WTC11 (cell line): ENCODE measurements at regions of chr15 and their contacts with region 1.

Region 1: DNA sequence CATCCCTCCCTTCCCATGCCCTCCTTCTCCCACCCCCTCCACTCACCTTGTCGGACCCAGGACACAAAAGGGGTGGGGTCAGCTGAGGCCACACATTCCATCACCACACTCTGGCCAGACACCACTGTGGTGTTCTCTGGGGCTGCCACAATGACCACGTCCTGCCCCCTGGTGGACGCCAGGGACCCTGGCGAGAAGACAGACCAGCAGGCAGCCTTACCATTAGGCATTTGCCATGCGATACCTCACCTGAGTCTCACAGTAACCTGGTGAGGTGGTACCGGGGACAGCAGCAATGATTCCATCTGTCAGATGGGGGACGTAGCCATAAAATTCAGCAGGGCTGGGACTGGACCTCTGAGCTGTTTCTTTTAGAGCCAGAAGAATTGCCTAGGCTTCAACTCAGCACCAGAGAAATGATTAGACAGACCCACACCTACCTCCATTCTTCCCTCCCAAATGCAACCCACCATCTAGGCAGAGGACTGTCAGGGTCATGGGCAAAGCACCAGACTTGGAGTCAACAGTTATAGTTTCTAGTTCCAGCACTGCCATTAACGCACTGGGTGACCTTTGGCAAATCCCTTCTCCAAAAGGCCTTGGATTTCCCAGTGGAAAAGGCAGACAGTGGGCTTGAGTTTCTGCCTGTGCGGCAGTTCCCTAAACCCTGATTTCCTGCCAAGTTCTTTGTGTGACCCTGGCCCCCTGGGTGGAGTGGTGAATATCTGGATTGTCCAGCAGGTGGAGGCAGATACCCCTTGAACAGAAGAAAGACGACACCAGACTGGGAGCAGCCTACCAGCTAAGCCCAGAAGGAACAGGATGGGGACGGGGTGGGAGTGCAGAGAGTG is 21.8 kb downstream of the IGDCC4 start:
- DNase-seq: peak; percentile 92
- ATAC-seq: peak; percentile 83
- H3K4me3 Mint-ChIP-seq: no peak overlapping the region
- H3K27ac Mint-ChIP-seq: peak overlapping the region; percentile 95
- H3K4me1 Mint-ChIP-seq: peaks cover 42% of the 10 kb centered on the region
- H3K27me3 Mint-ChIP-seq: peaks cover 24% of the 10 kb centered on the region
- CTCF ChIP-seq: peak; percentile 74

Region 2: DNA sequence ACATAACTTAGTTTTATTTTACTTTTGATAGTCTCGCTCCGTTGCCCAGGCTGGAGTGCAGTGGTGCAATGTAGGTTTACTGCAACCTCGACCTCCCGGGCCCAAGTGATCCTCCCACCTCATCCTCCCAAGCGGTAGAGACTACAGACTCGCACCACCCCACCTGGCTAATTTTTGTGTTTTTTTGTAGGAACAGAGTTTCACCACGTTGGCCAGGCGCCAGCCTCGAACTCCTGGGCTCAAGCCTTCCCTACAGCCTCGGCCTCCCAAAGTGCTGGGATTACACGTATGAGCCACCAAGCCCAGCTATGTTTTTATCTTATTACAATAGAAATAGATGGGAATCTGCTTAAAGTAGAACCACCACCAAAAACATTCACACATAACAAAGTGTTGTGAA is 102.3 kb before region 1 on chr15:
- CTCF ChIA-PET with region 1: no interaction called
- POLR2A ChIA-PET with region 1: no interaction called
- DNase-seq: no peak
- ATAC-seq: no peak
- H3K4me3 Mint-ChIP-seq: no peak overlapping the region
- H3K27ac Mint-ChIP-seq: no peak overlapping the region
- H3K4me1 Mint-ChIP-seq: peaks cover 24% of the 10 kb centered on the region
- H3K27me3 Mint-ChIP-seq: no peaks in the 10 kb centered on the region
- CTCF ChIP-seq: no peak

Region 3: GRCh38 chr15:65414841-65415621 is 14.0 kb after region 1 on chr15:
- CTCF ChIA-PET with region 1: interaction called, 105 read pairs
- POLR2A ChIA-PET with region 1: interaction called, 6 read pairs
- DNase-seq: peak; percentile 89
- ATAC-seq: peak; percentile 85
- H3K4me3 Mint-ChIP-seq: peak overlapping the region; percentile 54
- H3K27ac Mint-ChIP-seq: peak overlapping the region; percentile 100
- H3K4me1 Mint-ChIP-seq: peaks cover 96% of the 10 kb centered on the region
- H3K27me3 Mint-ChIP-seq: no peaks in the 10 kb centered on the region; the same call in 1 of the 2 replicates
- CTCF ChIP-seq: no peak

Region 4: DNA sequence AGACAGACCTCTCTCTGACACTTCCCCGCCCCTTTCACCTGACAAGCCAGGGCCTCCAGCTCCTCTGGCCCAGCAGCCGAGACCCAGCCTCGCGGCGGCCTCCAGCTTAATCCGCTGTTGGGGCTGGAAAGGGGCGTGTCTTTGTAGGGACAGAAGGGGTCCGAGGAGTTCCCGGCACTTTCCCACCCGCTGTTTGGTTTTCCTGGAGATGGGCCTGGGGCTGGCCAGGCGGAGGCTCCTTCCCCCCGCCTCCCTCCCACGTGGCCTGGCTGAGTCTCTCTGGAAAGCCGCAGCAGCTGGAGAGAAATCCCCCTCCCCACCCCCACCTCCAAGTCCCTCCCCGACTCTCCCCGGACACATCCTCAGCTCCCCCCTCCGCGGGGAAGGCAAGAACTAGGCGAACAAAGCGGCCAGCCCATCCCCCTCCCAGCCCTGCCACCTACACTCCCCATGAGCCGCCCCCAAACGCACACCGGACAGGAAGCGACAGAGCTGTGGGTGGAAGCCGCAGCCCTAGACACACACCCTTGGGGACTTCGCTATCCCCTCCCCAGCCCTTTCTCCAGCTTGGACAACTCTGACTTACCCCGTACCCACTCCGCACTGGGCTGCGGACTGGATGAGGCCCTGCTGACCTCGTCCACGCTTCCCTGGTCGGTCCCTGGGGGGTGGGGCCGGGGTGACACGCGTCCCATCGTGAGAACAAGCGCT is 20.5 kb after region 1 on chr15:
- CTCF ChIA-PET with region 1: interaction called, 105 read pairs
- POLR2A ChIA-PET with region 1: interaction called, 12 read pairs
- DNase-seq: peak; percentile 96
- ATAC-seq: peak; percentile 71
- H3K4me3 Mint-ChIP-seq: peak overlapping the region; percentile 98
- H3K27ac Mint-ChIP-seq: peak overlapping the region; percentile 93
- H3K4me1 Mint-ChIP-seq: peaks cover 77% of the 10 kb centered on the region
- H3K27me3 Mint-ChIP-seq: peaks cover 20% of the 10 kb centered on the region
- CTCF ChIP-seq: no peak

Region 5: DNA sequence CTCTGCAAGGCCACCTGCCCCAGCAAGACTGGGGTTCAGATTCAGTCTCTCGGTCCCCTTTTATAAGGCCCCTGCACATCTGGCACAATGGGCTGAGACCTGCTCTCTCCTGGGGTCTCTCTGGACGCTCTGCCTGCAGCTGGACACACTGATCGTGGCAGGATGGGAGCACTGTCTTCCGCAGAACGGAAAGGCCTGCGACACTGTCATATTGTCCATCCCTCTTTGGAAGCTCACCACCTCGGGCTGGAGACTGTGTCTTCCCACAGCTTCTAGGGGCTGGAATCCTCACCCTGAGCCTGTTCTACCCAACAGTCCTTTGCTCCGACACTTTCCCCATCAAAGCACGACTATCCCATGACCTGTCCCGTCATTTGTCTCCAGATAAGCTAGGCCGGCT is 33.2 kb after region 1 on chr15:
- CTCF ChIA-PET with region 1: interaction called, 46 read pairs
- POLR2A ChIA-PET with region 1: no interaction called
- DNase-seq: no peak
- ATAC-seq: no peak
- H3K4me3 Mint-ChIP-seq: no peak overlapping the region
- H3K27ac Mint-ChIP-seq: no peak overlapping the region
- H3K4me1 Mint-ChIP-seq: no peaks in the 10 kb centered on the region
- H3K27me3 Mint-ChIP-seq: no peaks in the 10 kb centered on the region
- CTCF ChIP-seq: no peak

Region 6: DNA sequence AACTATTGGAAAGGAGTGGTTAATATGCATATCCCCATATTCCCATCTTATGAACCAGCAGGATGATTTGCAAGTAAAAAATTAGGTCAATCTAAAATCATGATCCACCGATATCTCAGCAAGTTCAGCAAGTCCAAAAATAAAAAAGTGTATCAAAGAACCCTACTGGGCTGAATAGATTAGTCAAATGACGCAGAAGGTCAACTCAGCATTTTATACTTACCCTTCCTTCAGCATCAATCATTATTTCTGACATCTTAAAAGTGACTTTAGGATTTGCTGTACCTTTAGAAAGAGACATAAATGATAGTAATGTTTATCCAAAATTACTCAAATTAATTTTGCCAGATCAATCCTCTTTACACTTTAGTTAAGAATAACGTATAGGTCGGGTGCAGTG is 83.9 kb after region 1 on chr15:
- CTCF ChIA-PET with region 1: interaction called, 10 read pairs
- POLR2A ChIA-PET with region 1: no interaction called
- DNase-seq: no peak
- ATAC-seq: no peak
- H3K4me3 Mint-ChIP-seq: no peak overlapping the region
- H3K27ac Mint-ChIP-seq: no peak overlapping the region
- H3K4me1 Mint-ChIP-seq: no peaks in the 10 kb centered on the region
- H3K27me3 Mint-ChIP-seq: no peaks in the 10 kb centered on the region
- CTCF ChIP-seq: no peak